Endothelial cell of umbilical vein (primary cell): ENCODE measurements at regions of chr5 and their contacts with region 1.

Region 1: GRCh38 chr5:134547579-134547978 is 22.1 kb downstream of the JADE2 start:
- DNase-seq: peak; percentile 37
- H3K4me3 ChIP-seq: no peak overlapping the region
- H3K27ac ChIP-seq: no peak overlapping the region
- H3K4me1 ChIP-seq: peaks cover 35% of the 10 kb centered on the region
- H3K27me3 ChIP-seq: no peaks in the 10 kb centered on the region
- CTCF ChIP-seq: no peak
- POLR2A ChIP-seq: no peak

Region 2: DNA sequence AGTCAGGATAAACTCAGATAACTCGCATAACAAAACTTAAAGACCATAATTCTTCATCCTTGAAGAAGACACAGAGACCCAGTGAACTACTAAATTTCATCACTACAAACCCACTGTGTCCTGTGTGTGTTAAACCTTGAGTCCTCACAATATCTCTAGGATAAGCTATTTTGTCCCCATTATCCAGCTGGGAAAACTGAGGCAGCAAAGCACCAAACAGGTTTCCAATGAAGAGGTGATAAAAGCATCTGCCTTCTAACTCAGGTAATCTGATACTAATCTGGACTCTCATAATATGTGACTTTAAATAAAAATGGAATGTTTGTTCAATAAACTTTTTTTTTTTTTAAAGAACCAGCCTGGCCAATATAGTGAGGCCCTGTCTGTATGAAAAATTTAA is 259.0 kb before region 1 on chr5:
- CTCF ChIA-PET with region 1: no interaction called
- POLR2A ChIA-PET with region 1: no interaction called
- dilution Hi-C with region 1: no loop called
- intact Hi-C with region 1: no loop called
- DNase-seq: no peak
- H3K4me3 ChIP-seq: no peak overlapping the region
- H3K27ac ChIP-seq: no peak overlapping the region
- H3K4me1 ChIP-seq: no peaks in the 10 kb centered on the region
- H3K27me3 ChIP-seq: peaks cover 3 to 4% of the 10 kb centered on the region in 2 experiments
- CTCF ChIP-seq: no peak
- POLR2A ChIP-seq: no peak

Region 3: GRCh38 chr5:134561871-134562296 is 14.3 kb after region 1 on chr5:
- CTCF ChIA-PET with region 1: interaction called, 12 read pairs
- POLR2A ChIA-PET with region 1: no interaction called
- dilution Hi-C with region 1: no loop called
- intact Hi-C with region 1: no loop called
- DNase-seq: peak; percentile 98
- H3K4me3 ChIP-seq: no peak overlapping the region
- H3K27ac ChIP-seq: peak overlapping the region; percentile 47
- H3K4me1 ChIP-seq: peaks cover 20% of the 10 kb centered on the region
- H3K27me3 ChIP-seq: no peaks in the 10 kb centered on the region
- CTCF ChIP-seq: peak; percentile 75 to 86
- POLR2A ChIP-seq: peak; percentile 47

Region 4: DNA sequence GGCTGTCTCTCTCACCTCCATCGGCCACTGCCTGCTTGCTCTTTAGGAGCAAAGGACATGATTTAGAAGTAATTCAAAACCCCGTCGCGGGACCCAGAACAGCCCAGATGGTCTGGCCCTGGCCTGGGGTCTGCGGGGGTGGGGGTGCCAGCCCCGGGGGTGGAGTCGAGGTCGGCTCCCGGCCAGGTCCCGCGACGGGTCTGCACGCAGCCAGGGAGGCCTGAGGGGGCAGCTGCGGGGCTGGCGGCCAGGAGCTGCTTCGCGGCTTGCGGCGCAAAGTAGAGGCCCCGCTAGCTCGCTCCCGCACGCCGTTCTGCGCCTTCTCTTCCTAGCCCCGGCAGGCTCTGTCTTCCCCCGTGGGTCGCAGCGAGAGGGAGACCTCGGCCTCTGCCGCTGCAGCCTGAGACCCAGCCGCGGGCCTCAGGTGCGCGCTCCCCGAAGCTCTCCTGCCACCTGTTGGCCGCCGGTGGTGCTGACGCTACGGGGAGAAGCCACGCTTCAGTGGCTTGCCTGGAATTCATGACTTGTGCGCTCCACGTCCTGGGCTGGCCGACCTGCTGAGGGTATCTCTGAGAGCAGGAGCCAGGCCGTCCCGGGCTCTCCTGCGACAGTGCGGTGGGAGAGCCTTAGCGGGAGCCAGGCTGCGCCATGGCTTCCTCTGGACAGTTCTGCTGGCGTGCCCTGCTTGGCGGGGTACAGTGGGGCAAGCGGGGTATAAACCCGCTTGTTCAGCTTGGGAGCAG is 643.7 kb after region 1 on chr5:
- CTCF ChIA-PET with region 1: no interaction called
- POLR2A ChIA-PET with region 1: no interaction called
- dilution Hi-C with region 1: no loop called
- intact Hi-C with region 1: no loop called
- DNase-seq: peak; percentile 73
- H3K4me3 ChIP-seq: peak overlapping the region in 2 of 3 experiments; percentile 22 to 40
- H3K27ac ChIP-seq: no peak overlapping the region
- H3K4me1 ChIP-seq: peaks cover 17% of the 10 kb centered on the region
- H3K27me3 ChIP-seq: peaks cover 7 to 28% of the 10 kb centered on the region in 2 experiments
- CTCF ChIP-seq: peak; percentile 81 to 98
- POLR2A ChIP-seq: no peak